GM10248 (cell line): ENCODE measurements at regions of chr4 and their contacts with region 1.

Region 1: DNA sequence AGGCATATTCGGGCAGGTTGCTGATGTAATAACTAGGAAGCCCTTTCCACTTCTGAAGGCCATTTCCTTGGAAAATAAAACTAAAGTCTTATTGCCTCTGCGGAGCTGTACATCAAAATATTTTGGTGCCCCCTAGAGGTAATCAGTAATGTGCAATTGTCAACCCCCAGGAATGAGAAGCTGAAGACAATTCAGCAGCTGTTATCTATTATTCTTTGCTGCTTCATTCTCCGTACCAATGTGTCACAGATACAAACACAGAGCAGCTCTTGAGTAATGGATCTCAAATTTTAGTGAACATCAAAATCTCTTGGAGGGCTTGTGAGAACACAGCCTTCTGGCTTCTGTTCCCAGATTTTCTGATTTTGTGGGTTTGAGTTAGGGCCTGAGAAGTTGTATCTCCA is 3.5 kb upstream of the SLIT2 start:
- DNase-seq: peak; percentile 16
- CTCF ChIP-seq: peak; percentile 55

Region 2: GRCh38 chr4:19224820-19225219 is 1023.3 kb before region 1 on chr4:
- CTCF ChIA-PET with region 1: interaction called, 10 read pairs
- POLR2A ChIA-PET with region 1: no interaction called
- DNase-seq: peak; percentile 13
- CTCF ChIP-seq: peak; percentile 11

Region 3: DNA sequence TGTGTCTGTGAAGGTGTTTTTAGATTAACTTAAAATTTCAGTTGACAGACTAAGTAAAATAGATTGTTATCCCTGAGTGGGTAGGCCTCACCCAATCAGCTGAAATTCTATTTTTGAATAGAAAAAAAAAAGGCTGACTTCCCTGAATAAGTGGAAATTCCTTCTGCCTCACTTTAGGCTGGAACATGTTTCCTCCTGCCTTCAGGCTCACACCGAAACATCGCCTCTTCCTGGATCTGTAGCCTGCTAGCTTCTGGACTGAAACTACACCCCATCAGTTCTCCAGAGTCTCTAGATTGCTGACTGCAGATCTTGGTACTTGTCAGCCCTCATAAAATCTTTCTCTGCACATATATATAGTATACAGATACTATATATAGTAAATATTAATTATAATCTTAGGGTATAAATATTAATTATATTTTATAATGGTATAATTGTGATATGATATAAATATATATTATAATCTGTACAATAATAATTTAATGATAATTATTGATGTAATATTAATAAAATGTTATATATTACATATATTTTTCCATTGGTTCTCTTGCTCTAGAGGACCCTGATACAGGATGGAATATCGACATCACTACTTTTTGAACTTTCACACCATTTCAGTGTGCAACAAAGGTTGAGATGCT is 10.1 kb before region 1 on chr4:
- CTCF ChIA-PET with region 1: interaction called, 15 read pairs
- POLR2A ChIA-PET with region 1: no interaction called
- DNase-seq: no peak
- CTCF ChIP-seq: no peak

Region 4: DNA sequence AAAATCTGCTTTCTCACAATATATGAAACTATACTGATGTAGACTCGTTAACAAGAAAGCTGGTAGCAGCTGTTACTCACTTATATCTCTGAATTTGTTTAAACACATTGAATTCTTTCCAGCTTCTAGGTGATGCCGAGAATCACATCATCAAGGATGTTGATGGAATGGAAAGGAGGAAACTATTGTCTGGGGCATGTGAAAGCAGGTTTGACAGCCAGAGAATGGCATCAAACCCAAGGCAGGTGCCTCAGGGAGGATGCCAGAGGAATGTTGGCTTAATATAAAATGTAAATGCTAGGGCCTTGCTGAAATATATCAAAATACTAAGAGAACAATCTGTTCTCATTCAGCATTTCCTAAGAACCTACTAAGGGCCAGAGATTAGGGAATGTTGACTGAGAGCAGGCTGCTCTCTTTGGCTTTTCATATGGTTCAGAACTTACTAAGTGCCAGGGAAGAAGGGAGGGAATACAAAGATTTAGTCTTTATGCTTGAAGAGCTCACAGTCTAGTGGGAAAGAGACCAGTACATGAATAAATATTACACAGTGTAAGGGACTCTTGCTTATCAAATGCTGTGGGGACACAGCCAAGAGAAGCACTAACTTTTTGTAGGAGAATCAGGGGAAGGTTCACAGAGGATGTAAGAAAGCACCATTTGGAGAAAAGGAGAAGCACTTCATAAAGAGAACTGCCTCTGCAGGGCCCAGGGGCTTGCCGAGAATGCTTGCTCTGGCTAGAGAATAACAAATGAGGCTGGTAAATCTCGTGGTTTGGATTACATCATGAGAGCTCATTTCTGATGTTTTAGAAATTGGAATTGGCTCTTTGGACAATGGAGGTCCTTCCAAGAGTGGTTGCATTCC is 18.3 kb after region 1 on chr4:
- CTCF ChIA-PET with region 1: interaction called, 17 read pairs
- POLR2A ChIA-PET with region 1: no interaction called
- DNase-seq: no peak
- CTCF ChIP-seq: no peak

Region 5: GRCh38 chr4:20512033-20512792 is 264.1 kb after region 1 on chr4:
- CTCF ChIA-PET with region 1: no interaction called
- POLR2A ChIA-PET with region 1: no interaction called
- DNase-seq: no peak
- CTCF ChIP-seq: no peak